Testis (tissue), 5 donors: ENCODE measurements at regions of chr1 and their contacts with region 1.

Region 1: GRCh38 chr1:88291611-88292354 is 392.3 kb upstream of the PKN2 start:
- DNase-seq: no peak
- H3K4me3 ChIP-seq: no peak overlapping the region
- H3K27ac ChIP-seq: no peak overlapping the region
- H3K4me1 ChIP-seq: no peaks in the 10 kb centered on the region
- H3K27me3 ChIP-seq: no peaks in the 10 kb centered on the region
- CTCF ChIP-seq: no peak
- POLR2A ChIP-seq: no peak

Region 2: GRCh38 chr1:86950712-86951419 is 1340.9 kb before region 1 on chr1:
- intact Hi-C with region 1: loop called (anchors 10 kb)
- DNase-seq: no peak
- H3K4me3 ChIP-seq: no peak overlapping the region
- H3K27ac ChIP-seq: no peak overlapping the region
- H3K4me1 ChIP-seq: no peaks in the 10 kb centered on the region
- H3K27me3 ChIP-seq: no peaks in the 10 kb centered on the region
- CTCF ChIP-seq: no peak
- POLR2A ChIP-seq: no peak

Region 3: GRCh38 chr1:87560601-87561360 is 731.0 kb before region 1 on chr1:
- intact Hi-C with region 1: no loop called
- DNase-seq: no peak
- H3K4me3 ChIP-seq: no peak overlapping the region
- H3K27ac ChIP-seq: no peak overlapping the region
- H3K4me1 ChIP-seq: no peaks in the 10 kb centered on the region
- H3K27me3 ChIP-seq: no peaks in the 10 kb centered on the region
- CTCF ChIP-seq: no peak
- POLR2A ChIP-seq: no peak